Psoas muscle (tissue), 8 donors: ENCODE measurements at regions of chr16 and their contacts with region 1.

Region 1: DNA sequence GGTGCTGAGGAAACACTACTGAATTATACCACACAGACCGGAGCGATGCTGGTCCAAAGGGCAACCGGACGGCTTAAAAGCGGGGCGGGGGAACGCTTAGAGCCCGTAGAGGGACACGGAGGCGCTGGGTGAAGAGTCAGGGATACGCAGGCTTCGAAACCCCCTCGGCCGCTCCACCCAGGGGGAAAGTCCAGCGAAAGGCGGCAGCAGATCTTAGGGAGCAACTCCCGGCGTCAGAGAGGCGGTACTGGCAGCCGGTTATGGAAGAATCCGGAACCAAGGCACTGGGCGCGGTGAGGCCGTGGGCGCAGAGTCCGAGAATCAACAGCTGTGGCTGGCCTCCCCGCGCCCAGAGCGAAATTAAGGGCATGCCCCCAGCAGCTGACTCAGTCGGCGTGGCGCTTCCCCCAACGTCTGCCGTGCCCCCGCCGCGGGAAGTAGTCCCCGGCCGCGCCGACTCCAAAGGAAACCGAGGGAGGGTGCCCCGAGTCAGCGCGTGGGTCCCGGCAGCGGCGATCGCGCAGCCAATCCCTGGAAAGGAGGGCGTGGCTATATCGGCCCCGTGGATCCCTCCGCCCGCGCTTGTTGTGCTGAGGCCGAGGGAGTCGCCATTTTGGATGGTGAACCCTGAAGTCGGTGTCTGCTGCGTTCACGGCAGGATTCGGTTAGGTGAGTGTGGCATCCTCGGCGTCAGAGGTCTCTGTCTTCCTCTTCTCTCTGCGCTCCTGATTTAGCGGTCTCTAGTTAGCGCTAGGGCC is at the start of gene IST1:
- DNase-seq: peak; percentile 99
- ATAC-seq: peak; percentile 95 to 98 (median 98)
- H3K4me3 ChIP-seq: peak within 1 kb of the TSS; percentile 81
- H3K27ac ChIP-seq: peak within 1 kb of the TSS; percentile 91
- H3K4me1 ChIP-seq: peaks cover 28% of the 10 kb centered on the region
- H3K27me3 ChIP-seq: no peaks in the 10 kb centered on the region
- CTCF ChIP-seq: no peak
- total RNA-seq, gene IST1: 69.2 to 111 (median 81.6) TPM

Region 2: GRCh38 chr16:71808593-71809459 is 86.3 kb before region 1 on chr16 and contains the start of gene AP1G1:
- intact Hi-C with region 1: loop called in 1 of 2 experiments (anchors 5 kb)
- DNase-seq: peak; percentile 95 to 98
- ATAC-seq: peak; percentile 95 to 98 (median 97)
- H3K4me3 ChIP-seq: peak within 1 kb of the TSS; percentile 99
- H3K27ac ChIP-seq: peak within 1 kb of the TSS; percentile 100
- H3K4me1 ChIP-seq: peaks cover 29% of the 10 kb centered on the region
- H3K27me3 ChIP-seq: no peaks in the 10 kb centered on the region
- CTCF ChIP-seq: no peak
- total RNA-seq, gene AP1G1: 54.1 to 69.8 (median 62.8) TPM

Region 3: DNA sequence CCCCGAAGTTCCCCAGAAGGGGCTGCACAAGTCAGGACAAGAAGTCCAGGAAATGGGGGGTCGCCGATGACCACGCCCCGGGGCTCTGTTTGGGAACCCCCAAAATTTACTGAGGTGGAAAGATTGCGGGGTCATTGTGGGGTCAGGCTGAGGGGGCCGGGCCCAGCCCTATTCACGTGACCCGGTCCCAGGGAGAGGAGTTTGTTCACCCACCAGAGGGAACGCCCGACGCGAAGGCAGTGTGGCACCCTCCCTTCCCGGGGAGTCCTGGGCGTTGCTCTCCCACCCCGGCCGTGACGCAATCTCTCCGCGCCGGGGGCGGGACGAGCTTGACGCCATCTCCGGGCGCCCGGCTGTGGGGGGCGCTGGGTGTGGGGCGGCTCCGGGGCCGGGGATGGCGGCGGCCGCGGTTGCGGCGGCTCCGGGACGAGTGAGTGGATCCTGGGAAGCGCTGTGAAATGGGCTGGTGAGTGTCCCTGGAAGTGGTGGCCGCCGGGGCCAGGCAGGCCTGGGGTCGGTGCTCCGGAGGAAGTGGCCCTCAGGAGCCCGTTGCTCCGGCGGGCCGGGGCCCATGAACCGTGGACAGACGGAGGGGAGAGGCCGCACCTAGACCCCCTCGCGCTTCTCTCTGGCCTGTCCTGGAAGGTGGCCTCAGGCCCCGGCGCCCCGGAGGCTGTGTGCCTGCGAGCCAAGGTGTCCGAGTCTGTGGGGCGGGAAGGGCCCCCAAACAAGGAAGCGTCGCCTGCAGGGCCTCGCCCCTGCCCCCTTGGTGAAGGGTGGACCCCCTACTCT is 49.3 kb before region 1 on chr16 and contains the start of gene ATXN1L:
- intact Hi-C with region 1: loop called in 1 of 2 experiments (anchors 5 kb)
- DNase-seq: peak; percentile 93 to 96
- ATAC-seq: peak; percentile 94 to 96 (median 95)
- H3K4me3 ChIP-seq: peak within 1 kb of the TSS; percentile 100
- H3K27ac ChIP-seq: peak within 1 kb of the TSS; percentile 96
- H3K4me1 ChIP-seq: peaks cover 26% of the 10 kb centered on the region
- H3K27me3 ChIP-seq: no peaks in the 10 kb centered on the region
- CTCF ChIP-seq: no peak
- total RNA-seq, gene ATXN1L: 18.1 to 28.0 (median 22.4) TPM

Region 4: DNA sequence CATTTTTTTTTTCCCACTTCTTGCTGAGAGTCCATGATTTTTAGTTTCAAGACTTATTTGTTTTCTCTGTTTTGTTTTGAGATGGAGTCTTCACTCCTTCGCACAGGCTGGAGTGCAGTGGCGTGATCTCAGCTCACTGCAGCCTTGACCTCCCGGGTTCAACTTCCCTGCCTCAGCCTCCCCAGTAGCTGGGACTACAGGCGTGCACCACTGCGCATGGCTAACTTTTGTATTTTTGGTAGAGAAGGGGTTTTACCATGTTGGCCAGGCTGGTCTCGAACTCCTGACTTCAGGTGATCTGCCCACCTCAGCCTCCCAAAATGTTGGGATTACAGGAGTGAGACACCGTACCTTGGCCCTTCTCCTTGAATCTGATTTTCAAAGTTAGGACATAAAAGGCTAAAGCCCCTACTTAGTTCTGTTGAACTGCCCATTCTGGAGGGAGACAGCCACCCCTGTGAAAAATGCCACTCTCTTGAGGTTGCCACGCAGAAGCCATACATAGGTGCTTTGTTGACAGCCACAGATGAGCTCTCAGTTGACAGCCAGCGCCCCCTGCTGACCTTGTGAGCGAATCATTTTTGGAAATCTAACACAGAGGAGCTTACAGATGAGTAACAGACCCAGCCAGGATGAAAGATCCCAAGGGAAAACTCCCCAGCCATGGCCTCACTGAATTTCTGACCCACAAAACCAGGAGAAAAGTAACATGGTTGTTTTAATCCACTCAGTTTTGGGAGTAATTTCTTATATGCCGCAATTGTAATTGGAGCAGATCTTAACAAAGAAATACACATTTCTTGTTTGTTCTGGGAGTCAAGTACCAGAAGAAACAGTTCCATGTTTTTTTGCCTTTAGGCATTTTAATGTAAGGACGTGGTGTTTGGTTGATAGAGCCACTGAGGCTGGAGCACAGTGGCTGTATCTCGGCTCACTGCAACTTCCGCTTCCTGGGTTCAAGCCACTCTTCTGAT is 66.3 kb after region 1 on chr16:
- intact Hi-C with region 1: loop called in 1 of 2 experiments (anchors 5 kb)
- DNase-seq: peak; percentile 86 to 88
- ATAC-seq: peak; percentile 86 to 99 (median 96)
- H3K4me3 ChIP-seq: no peak overlapping the region
- H3K27ac ChIP-seq: no peak overlapping the region
- H3K4me1 ChIP-seq: no peaks in the 10 kb centered on the region
- H3K27me3 ChIP-seq: no peaks in the 10 kb centered on the region
- CTCF ChIP-seq: peak; percentile 81

Region 5: GRCh38 chr16:72008424-72009216 is 113.5 kb after region 1 on chr16 and contains the start of gene DHODH:
- intact Hi-C with region 1: loop called in 1 of 2 experiments (anchors 5 kb)
- DNase-seq: peak; percentile 99
- ATAC-seq: peak; percentile 99 to 100 (median 99)
- H3K4me3 ChIP-seq: peak within 1 kb of the TSS; percentile 99
- H3K27ac ChIP-seq: peak within 1 kb of the TSS; percentile 93
- H3K4me1 ChIP-seq: peaks cover 6% of the 10 kb centered on the region
- H3K27me3 ChIP-seq: no peaks in the 10 kb centered on the region
- CTCF ChIP-seq: no peak
- total RNA-seq, gene DHODH: 7.3 to 12.5 (median 8.8) TPM